Left cardiac atrium (tissue), 4 donors: ENCODE measurements at regions of chrX and their contacts with region 1.

Region 1: GRCh38 chrX:55057675-55058249 is 17.1 kb upstream of the PAGE2B start:
- DNase-seq: no peak
- ATAC-seq: peak; percentile 79 to 82

Region 2: GRCh38 chrX:53317365-53318069 is 1740.2 kb before region 1 on chrX:
- intact Hi-C with region 1: loop called in 1 of 2 experiments (anchors 5 kb)
- DNase-seq: peak; percentile 73
- ATAC-seq: peak; percentile 72 to 76

Region 3: GRCh38 chrX:54891573-54891972 is 166.2 kb before region 1 on chrX:
- intact Hi-C with region 1: loop called in 1 of 2 experiments (anchors 10 kb)
- DNase-seq: no peak
- ATAC-seq: no peak